Tibial artery (tissue), 4 donors: ENCODE measurements at regions of chr12 and their contacts with region 1.

Region 1: DNA sequence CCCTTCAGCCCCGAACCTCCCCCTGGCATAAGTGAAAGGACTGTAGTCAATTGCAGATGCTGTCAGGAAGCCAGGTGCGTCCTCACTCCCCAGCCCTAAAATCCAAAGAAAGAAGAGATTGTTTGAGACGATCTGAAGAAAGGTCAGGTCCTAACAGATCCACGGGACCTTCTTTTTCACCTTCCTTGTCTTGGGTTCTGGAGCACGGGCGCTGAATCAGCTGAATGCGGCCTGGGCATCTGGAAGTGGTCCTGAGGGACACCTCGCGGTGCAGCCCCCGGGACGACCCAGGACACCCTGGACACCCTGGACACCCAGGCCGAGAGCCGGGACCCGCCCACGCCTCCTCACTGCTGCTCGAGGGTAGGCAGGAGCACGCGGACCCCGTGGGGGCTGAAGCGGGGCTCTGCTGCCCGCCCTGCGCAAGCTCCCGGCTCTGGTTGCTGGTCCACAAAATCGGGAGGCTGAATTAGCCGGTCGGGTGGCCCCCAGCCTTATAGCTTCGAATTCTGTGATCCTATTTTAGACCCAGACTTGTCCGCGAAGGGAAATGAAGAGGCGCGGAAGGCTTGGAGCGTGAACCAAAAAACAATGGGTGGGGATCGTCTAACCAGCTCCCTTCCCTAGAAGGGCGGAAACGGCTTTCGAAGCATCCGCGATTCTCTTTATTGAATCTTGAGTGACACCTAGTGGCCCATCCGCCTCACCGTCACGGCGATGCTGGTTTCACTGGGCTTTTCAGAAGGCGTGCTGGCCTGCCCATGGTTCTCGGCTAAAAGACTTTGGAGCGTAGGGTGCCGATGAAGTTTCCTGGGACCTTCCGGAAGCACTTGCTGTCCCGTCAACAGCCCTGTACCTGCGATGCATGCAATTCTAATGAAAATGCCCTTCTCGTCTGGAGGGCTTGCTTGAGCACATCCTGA is 46.4 kb upstream of the PLXNC1 start:
- DNase-seq: peak; percentile 90 to 92
- H3K4me3 ChIP-seq: peak overlapping the region; percentile 54 to 73
- H3K27ac ChIP-seq: peak overlapping the region; percentile 38 to 39
- H3K4me1 ChIP-seq: peaks cover 0 to 12% (median 4%) of the 10 kb centered on the region in 4 donors
- H3K27me3 ChIP-seq: peaks cover 0 to 18% of the 10 kb centered on the region in 2 donors
- CTCF ChIP-seq: peak; percentile 79 to 83

Region 2: GRCh38 chr12:93502802-93503623 is 599.0 kb before region 1 on chr12:
- intact Hi-C with region 1: loop called (anchors 2 kb)
- DNase-seq: no peak
- H3K4me3 ChIP-seq: no peak overlapping the region
- H3K27ac ChIP-seq: no peak overlapping the region
- H3K4me1 ChIP-seq: no peaks in the 10 kb centered on the region
- H3K27me3 ChIP-seq: no peaks in the 10 kb centered on the region
- CTCF ChIP-seq: peak; percentile 68 to 77

Region 3: DNA sequence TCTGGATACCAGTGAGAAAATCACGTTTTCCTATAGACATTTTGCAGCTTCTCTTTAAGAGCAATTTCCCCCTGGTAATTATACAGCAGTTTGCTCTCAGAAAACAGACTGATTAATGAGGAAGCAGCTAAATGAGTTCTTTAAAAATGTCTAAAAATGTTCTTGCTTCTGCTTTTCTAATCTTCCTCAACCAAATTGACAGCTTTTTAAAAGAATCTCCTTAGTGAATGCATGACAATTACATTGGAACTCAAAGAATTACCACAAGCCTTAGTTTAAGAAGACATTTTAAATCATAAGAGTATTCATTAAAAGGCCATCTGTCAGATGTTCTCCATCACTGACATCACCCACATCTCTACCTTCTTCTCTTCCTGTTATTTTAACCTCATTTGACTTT is 89.4 kb before region 1 on chr12:
- intact Hi-C with region 1: no loop called
- DNase-seq: no peak
- H3K4me3 ChIP-seq: no peak overlapping the region
- H3K27ac ChIP-seq: no peak overlapping the region
- H3K4me1 ChIP-seq: no peaks in the 10 kb centered on the region
- H3K27me3 ChIP-seq: no peaks in the 10 kb centered on the region
- CTCF ChIP-seq: no peak